Sciatic nerve (tissue), 2 donors: ENCODE measurements at regions of chr9 and their contacts with region 1.

Region 1: GRCh38 chr9:20364954-20365353 is 257.3 kb downstream of the MLLT3 start:
- DNase-seq: no peak
- ATAC-seq: no peak

Region 2: GRCh38 chr9:20408513-20408912 is 43.6 kb after region 1 on chr9:
- intact Hi-C with region 1: loop called (anchors 2 kb)
- DNase-seq: no peak
- ATAC-seq: no peak